GM18951 (cell line): ENCODE measurements at regions of chr20 and their contacts with region 1.

Region 1: DNA sequence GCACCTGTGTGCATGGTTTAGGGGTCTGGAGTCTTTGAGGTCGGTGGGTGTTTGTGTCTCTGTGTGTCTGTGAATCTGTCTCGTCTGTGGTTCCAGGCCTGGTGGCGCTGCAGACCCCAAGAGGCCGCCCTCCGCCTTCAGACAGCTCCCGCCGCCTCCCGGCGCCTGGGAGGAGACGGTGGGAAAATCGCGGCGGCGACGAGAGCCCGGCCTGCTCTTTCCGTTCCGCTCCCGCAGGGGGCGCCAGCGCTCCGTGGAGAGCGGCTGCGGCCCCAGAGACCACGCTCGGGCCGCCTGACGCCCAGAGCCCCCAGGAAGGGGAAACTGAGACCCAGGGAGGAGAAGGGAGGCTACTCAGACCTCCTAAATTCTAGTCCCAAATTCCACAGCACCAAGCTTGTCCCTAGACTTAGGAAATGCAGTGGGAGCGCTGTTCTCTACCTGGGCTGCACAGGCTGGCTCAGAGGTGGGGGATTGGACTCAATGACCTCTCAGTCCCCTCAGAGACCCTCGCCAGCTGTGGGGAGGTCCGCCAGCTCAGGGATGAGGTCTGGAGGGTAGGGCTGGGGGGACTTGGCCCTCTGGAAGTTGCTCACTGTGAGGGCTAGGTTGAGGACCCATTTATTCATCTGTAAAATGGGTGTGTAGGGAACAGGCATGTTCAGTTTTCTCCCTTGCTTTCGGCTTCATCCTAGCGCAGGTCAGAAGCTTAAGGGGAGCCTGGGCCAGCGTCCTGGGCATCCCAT is 36.9 kb upstream of the BLCAP start:
- POLR2A ChIP-seq: no peak

Region 2: GRCh38 chr20:38221119-38221589 is 656.6 kb after region 1 on chr20:
- in situ Hi-C with region 1: loop called (anchors 10 kb)
- POLR2A ChIP-seq: no peak